BJ (cell line): ENCODE measurements at regions of chr11 and their contacts with region 1.

Region 1: DNA sequence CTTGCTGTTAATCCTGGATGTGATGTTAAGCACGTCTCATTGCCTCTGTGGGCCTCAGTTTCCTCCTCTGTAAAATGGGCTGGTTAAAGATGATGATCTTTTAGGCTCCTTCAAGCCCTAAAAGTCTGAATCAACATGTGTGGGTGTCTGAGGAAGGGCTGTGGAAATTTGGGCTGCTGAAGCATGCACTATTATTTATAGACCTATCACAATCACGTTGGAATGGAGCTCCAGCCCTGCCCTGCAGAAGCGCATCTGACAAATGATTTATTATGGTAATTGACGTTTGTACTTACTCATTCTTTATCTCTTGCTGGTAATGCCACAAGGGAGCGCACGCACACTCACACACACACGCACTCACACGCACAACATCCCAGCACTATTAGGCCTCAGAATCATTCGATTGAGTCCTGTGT is 20.4 kb downstream of the P2RX3 start:
- DNase-seq: no peak
- H3K4me3 ChIP-seq: no peak overlapping the region
- H3K27me3 ChIP-seq: peaks cover 6% of the 10 kb centered on the region
- CTCF ChIP-seq: no peak

Region 2: GRCh38 chr11:56846631-56847576 is 511.6 kb before region 1 on chr11:
- CTCF ChIA-PET with region 1: no interaction called
- POLR2A ChIA-PET with region 1: no interaction called
- DNase-seq: no peak
- H3K4me3 ChIP-seq: no peak overlapping the region
- H3K27me3 ChIP-seq: no peaks in the 10 kb centered on the region
- CTCF ChIP-seq: no peak

Region 3: GRCh38 chr11:57345555-57346211 is 12.9 kb before region 1 on chr11:
- CTCF ChIA-PET with region 1: interaction called, 32 read pairs
- POLR2A ChIA-PET with region 1: no interaction called
- DNase-seq: no peak
- H3K4me3 ChIP-seq: no peak overlapping the region
- H3K27me3 ChIP-seq: no peaks in the 10 kb centered on the region; the same call in 1 of the 2 replicates
- CTCF ChIP-seq: peak; percentile 72